Head of caudate nucleus (tissue), 42 donors: ENCODE measurements at regions of chr17 and their contacts with region 1.

Region 1: GRCh38 chr17:5468075-5468473 is 708 bp downstream of the DHX33 start:
- DNase-seq: peak in 4 of 42 donors; percentile 1 to 46 (median 21)

Region 2: DNA sequence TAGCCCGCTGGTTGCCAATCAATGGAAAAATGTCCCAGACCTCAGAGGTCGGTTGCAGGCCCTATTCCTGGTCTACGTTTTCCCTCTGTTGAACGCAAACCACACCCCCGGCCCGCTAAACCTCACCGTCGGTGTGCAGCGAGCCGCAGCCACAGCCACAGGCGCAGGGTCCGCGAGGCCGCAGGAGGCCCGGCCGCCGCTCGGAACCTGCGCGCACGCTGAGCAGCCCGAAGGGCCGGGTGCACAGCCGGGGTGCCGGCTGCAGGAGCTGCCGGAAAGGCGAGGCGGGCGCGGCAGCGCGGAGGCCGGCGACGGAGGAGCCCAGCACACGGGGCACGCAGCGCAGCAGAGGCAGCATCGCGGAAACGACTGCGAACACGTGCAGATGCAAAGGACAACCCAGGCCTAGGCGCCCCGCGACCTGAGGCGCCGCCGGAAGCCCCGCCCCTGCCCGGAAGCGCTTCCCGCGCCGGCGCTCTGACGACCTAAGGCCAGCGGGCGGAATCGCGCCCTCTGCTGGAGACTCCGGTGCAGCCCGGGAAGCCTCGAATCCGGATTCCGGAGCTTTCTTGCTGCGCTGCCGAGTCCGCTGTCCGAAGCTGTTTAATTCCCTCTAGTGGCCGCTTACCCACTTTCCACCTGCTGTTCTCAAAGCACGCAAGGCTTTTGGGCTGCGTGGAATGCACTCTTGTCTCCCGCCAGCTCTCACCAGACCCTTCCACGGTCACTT is 29.2 kb before region 1 on chr17 and contains the start of gene C1QBP:
- intact Hi-C with region 1: loop called (anchors 2 kb)
- DNase-seq: peak; percentile 74 to 97 (median 91)

Region 3: DNA sequence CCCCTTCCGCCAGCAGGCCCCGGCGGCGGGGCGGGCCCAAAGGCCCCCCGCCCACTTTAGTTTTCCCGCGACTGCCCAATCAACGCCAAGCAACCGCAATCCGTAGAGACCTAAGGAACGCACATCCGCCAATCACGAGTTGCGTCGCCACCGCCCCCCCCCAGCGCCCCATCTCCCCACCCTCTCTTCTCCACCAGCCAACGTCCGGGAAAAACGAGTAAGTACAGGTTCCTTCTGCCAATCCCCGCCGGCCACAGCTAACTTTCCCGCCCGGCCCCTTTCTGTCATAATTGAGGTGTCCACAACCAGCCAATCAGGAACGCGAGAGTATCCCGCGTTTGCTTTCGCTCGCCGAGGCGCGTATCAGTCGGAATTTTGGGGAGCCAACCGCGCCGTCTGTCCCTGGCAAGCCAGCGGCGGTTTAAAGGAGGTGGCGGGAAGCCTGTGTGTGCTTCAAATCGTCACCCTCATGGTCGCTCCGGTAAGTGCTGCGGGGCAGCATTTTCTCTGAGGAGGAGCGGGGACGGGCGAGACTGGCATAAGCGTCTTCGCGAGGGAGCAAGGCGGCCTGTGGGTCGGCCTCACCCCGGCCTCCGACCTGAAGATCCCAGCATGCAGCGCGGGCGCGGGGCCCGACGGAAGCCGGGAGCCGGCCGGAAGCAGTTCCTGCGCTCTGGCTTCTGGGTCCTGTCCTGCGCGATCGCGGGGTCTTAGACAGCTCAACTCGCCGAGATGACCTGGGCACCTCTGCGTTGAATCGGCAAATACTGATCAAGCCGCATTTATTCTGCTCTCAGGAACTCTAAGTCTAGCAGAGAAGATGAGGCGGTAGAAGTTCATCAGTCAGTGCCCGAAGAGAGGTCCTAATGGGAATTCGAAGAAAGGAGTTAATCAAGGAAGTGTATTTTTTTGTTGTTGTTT is 18.4 kb after region 1 on chr17 and contains the start of gene MIS12:
- intact Hi-C with region 1: loop called (anchors 2 kb)
- DNase-seq: peak; percentile 93 to 100 (median 98)